ENCODE measurements at regions of chr10 and their contacts with region 1.

Region 1: GRCh38 chr10:95693668-95694534 is at the start of gene TCTN3:
- DNase-seq: peak; percentile 99
- H3K4me3 ChIP-seq: peak within 1 kb of the TSS; percentile 97
- H3K27ac ChIP-seq: peak within 1 kb of the TSS; percentile 72
- H3K27me3 ChIP-seq: no peaks in the 10 kb centered on the region
- CTCF ChIP-seq: peak; percentile 99
- polyA plus RNA-seq, gene TCTN3: 51.3 and 55.3 TPM in 2 replicates

Region 2: DNA sequence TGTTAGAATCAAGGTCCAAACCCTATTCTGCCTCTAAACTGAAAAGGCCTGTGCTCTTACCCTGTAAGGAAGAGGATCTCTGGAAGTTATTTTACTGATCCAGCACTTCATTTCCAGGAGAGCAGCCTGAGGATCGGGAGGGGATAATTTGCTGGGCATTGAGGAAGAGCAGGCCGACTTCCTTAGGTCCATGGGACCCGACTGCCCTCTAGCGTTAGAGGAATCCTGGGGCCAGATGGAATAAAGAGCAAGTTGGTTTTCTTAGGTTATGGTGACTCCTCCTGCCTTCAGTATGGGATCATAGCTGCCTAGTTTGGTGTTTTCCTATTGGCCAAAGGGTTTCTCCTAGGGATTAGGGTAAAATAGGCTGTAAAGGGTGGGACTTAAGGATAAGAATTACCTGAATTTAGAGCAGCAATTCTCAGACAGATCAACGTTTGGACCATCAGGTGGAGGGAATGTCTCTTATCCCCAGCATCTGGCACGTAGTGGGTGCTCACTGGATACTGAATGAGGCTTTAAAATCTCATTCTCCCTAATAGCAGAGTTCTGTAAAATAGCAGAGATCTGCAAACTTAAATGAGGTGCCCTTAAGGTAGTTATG is 92.7 kb before region 1 on chr10:
- CTCF ChIA-PET with region 1: interaction called, 17 read pairs
- POLR2A ChIA-PET with region 1: no interaction called
- DNase-seq: peak; percentile 70
- H3K4me3 ChIP-seq: no peak overlapping the region
- H3K27ac ChIP-seq: no peak overlapping the region
- H3K27me3 ChIP-seq: no peaks in the 10 kb centered on the region
- CTCF ChIP-seq: peak; percentile 98

Region 3: DNA sequence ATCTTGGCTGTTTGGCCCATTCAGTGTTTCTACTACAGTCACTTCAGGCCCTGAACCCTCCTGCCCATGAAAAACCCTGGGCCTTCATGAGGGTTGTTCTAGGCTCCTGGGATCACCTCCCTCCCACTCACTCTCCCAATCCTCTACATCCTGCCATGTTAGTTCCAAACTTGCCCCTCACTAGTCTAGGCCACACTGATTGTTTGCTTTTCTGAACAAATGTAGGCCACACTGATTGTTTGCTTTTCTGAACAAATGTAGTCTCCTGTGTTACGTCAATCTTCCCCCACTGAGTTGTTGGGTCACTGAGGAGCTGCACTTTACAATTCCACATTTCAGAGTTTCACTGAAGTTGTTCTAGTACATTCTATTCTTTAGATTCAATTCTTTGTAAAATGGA is 32.1 kb before region 1 on chr10:
- CTCF ChIA-PET with region 1: interaction called, 65 read pairs
- POLR2A ChIA-PET with region 1: interaction called, 5 read pairs
- DNase-seq: no peak
- H3K4me3 ChIP-seq: no peak overlapping the region
- H3K27ac ChIP-seq: no peak overlapping the region
- H3K27me3 ChIP-seq: no peaks in the 10 kb centered on the region
- CTCF ChIP-seq: no peak

Region 4: DNA sequence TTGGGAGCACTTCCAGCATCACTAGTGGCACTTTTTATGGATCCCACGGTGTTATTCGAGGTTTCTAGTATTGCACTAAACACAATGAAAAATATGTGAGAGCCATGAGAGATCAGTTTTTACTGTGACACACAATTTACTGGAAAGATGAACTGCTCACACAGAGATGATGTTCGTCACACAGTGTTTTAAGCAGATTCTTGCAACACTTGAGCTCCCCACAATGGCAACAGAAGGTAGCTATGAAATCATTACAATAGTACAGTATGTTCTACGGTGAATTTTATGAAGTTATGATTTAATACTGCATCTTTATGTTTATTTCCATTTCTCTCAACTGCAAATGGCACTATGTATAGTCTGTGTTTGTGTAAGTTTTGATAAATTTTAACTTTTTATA is 34.6 kb after region 1 on chr10:
- CTCF ChIA-PET with region 1: interaction called, 41 read pairs
- POLR2A ChIA-PET with region 1: no interaction called
- DNase-seq: no peak
- H3K4me3 ChIP-seq: no peak overlapping the region
- H3K27ac ChIP-seq: no peak overlapping the region
- H3K27me3 ChIP-seq: no peaks in the 10 kb centered on the region
- CTCF ChIP-seq: no peak

Region 5: GRCh38 chr10:95793401-95794045 is 99.6 kb after region 1 on chr10:
- CTCF ChIA-PET with region 1: interaction called, 23 read pairs
- POLR2A ChIA-PET with region 1: no interaction called
- DNase-seq: no peak
- H3K4me3 ChIP-seq: no peak overlapping the region
- H3K27ac ChIP-seq: no peak overlapping the region
- H3K27me3 ChIP-seq: no peaks in the 10 kb centered on the region
- CTCF ChIP-seq: no peak

Region 6: DNA sequence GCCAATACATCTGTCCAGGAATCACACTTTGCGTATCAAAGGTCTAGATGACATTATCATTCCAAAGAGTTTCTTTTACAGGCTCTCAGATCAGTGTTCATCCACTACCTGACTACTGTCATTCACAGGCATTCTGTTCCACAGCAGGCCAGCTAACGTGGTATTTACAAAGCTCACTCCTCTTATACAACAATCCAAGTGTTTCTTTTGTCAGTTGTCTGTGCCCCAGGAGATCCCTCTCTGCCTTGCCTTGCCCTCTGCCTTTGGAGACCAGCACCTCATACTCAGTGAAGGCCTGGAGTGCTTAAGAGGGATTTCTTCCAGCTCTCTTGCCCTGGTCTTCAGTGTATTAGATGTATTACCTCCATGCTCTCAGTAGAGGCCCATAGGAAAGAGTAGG is 179.2 kb after region 1 on chr10:
- CTCF ChIA-PET with region 1: interaction called, 238 read pairs
- POLR2A ChIA-PET with region 1: no interaction called
- DNase-seq: no peak
- H3K4me3 ChIP-seq: no peak overlapping the region
- H3K27ac ChIP-seq: no peak overlapping the region
- H3K27me3 ChIP-seq: no peaks in the 10 kb centered on the region
- CTCF ChIP-seq: no peak

Region 7: GRCh38 chr10:95964756-95965155 is 270.9 kb after region 1 on chr10:
- CTCF ChIA-PET with region 1: no interaction called
- POLR2A ChIA-PET with region 1: no interaction called
- DNase-seq: no peak
- H3K4me3 ChIP-seq: no peak overlapping the region
- H3K27ac ChIP-seq: no peak overlapping the region
- H3K27me3 ChIP-seq: peaks cover 2% of the 10 kb centered on the region
- CTCF ChIP-seq: no peak

Region 8: DNA sequence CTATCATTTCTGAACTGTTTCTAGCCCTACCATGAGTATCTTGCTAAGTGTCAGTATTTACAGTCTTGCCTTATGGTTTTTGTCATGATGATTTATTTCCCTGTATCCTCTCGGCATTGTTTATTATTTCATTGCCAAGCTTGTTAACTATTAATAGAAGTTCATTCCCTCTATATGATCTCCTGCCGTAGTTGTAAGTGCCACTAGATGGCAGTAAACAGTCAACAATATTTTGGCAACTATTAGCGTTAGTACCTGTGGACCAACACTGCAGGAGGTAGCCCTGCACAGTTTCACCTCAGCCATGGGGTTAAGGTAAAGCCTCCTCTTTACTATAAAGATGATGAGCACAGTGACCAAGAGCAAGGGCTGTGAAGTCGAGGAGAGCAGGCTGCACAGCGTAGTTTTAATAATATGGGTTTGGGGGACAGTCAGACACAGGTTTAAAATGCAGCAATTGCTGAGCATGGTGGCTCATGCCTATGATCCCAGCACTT is 323.3 kb after region 1 on chr10:
- CTCF ChIA-PET with region 1: interaction called, 17 read pairs
- POLR2A ChIA-PET with region 1: no interaction called
- DNase-seq: peak; percentile 23
- H3K4me3 ChIP-seq: no peak overlapping the region
- H3K27ac ChIP-seq: no peak overlapping the region
- H3K27me3 ChIP-seq: no peaks in the 10 kb centered on the region
- CTCF ChIP-seq: peak; percentile 78

Measured in AG04450 (cell line).